Spleen (tissue), 13 donors: ENCODE measurements at regions of chr11 and their contacts with region 1.

Region 1: GRCh38 chr11:25981998-25982397 is 349.9 kb upstream of the ANO3 start:
- DNase-seq: no peak
- H3K4me3 ChIP-seq: no peak overlapping the region
- H3K27ac ChIP-seq: no peak overlapping the region
- H3K4me1 ChIP-seq: peaks cover 0 to 11% (median 0%) of the 10 kb centered on the region in 6 donors
- H3K27me3 ChIP-seq: no peaks in the 10 kb centered on the region
- CTCF ChIP-seq: peak in 9 of 11 experiments; percentile 8 to 41 (median 38)
- POLR2A ChIP-seq: no peak

Region 2: DNA sequence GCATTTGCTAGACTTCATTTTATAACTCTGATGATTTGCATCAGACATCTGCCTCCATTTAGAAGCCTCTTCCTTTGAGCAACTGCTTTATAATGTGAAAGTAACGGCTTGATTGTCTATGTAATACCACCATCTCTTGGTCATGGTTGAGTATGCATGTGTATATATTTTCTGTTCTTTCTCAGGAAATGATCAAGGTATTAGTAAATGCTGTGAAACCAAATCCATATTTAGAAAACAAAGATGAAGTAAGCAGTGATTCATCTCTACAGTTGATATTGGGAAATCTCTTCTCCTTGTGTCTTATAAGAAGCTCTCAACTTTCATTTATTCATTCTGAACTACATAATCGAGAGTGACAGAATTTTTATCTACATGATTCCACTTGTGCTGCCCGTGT is 245.3 kb after region 1 on chr11:
- intact Hi-C with region 1: loop called (anchors 2 kb)
- DNase-seq: no peak
- H3K4me3 ChIP-seq: no peak overlapping the region
- H3K27ac ChIP-seq: no peak overlapping the region
- H3K4me1 ChIP-seq: no peaks in the 10 kb centered on the region
- H3K27me3 ChIP-seq: no peaks in the 10 kb centered on the region
- CTCF ChIP-seq: peak in 6 of 11 experiments; percentile 27 to 44 (median 38)
- POLR2A ChIP-seq: no peak

Region 3: GRCh38 chr11:26271666-26272065 is 289.7 kb after region 1 on chr11:
- intact Hi-C with region 1: loop called (anchors 5 kb)
- DNase-seq: no peak
- H3K4me3 ChIP-seq: no peak overlapping the region
- H3K27ac ChIP-seq: no peak overlapping the region
- H3K4me1 ChIP-seq: no peaks in the 10 kb centered on the region
- H3K27me3 ChIP-seq: no peaks in the 10 kb centered on the region
- CTCF ChIP-seq: no peak
- POLR2A ChIP-seq: no peak